Activated CD8-positive, alpha-beta T cell treated with anti-CD3 and anti-CD28 coated beads for 36 hours (primary cell): ENCODE measurements at regions of chr10 and their contacts with region 1.

Region 1: DNA sequence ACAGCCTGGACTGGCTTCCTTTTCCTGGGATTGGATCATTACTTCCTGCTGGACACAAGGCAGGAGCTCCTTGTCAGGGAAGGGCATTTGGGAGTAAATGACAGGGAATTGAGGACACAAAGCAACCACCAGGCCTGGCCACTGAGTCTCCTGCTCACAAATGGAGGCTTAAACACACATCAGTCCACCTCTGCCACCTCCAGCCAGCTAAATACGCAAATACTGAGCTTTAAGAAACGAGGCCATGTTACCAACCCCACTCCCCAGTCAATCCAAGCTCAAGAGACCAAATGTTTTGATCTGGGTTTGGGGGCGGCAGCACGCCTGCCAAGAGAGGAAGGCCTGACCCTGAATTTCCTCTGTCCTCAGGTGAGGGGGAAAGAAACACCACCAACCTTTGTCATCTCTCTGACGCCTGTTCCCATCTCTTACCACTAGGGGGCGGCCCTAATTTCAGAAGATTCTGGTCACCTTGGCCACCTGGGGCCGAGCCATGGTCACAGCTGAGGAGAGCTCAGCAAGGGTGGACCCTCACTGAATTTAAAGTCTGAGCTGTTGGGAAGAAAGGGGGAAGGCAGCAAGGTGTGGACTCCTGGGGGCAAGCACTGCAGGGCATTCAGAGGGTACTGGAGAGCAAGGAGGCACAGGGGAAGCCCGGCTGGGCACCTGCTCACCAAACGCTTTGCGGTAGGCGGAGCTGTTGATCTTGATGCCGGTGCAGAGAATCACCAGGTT is 16.5 kb downstream of the AIFM2 start:
- DNase-seq: peak; percentile 77
- ATAC-seq: peak; percentile 93
- H3K4me3 Mint-ChIP-seq: no peak overlapping the region
- H3K27ac Mint-ChIP-seq: no peak overlapping the region
- H3K4me1 Mint-ChIP-seq: peaks cover 11% of the 10 kb centered on the region
- H3K27me3 Mint-ChIP-seq: no peaks in the 10 kb centered on the region
- CTCF ChIP-seq: peak; percentile 90

Region 2: GRCh38 chr10:70048030-70048723 is 67.9 kb before region 1 on chr10:
- CTCF ChIA-PET with region 1: no interaction called
- POLR2A ChIA-PET with region 1: no interaction called
- intact Hi-C with region 1: no loop called
- DNase-seq: no peak
- ATAC-seq: no peak
- H3K4me3 Mint-ChIP-seq: no peak overlapping the region
- H3K27ac Mint-ChIP-seq: no peak overlapping the region
- H3K4me1 Mint-ChIP-seq: peaks cover 7% of the 10 kb centered on the region
- H3K27me3 Mint-ChIP-seq: peaks cover 26% of the 10 kb centered on the region
- CTCF ChIP-seq: no peak

Region 3: GRCh38 chr10:70084189-70084588 is 31.9 kb before region 1 on chr10:
- CTCF ChIA-PET with region 1: interaction called, 18 read pairs
- POLR2A ChIA-PET with region 1: no interaction called
- intact Hi-C with region 1: no loop called
- DNase-seq: no peak
- ATAC-seq: no peak
- H3K4me3 Mint-ChIP-seq: no peak overlapping the region
- H3K27ac Mint-ChIP-seq: no peak overlapping the region
- H3K4me1 Mint-ChIP-seq: no peaks in the 10 kb centered on the region
- H3K27me3 Mint-ChIP-seq: peaks cover 3% of the 10 kb centered on the region
- CTCF ChIP-seq: no peak

Region 4: GRCh38 chr10:70101668-70102067 is 14.4 kb before region 1 on chr10:
- CTCF ChIA-PET with region 1: interaction called, 99 read pairs
- POLR2A ChIA-PET with region 1: interaction called, 3 read pairs
- intact Hi-C with region 1: no loop called
- DNase-seq: no peak
- ATAC-seq: no peak
- H3K4me3 Mint-ChIP-seq: no peak overlapping the region
- H3K27ac Mint-ChIP-seq: no peak overlapping the region
- H3K4me1 Mint-ChIP-seq: peaks cover 2% of the 10 kb centered on the region
- H3K27me3 Mint-ChIP-seq: no peaks in the 10 kb centered on the region
- CTCF ChIP-seq: no peak

Region 5: DNA sequence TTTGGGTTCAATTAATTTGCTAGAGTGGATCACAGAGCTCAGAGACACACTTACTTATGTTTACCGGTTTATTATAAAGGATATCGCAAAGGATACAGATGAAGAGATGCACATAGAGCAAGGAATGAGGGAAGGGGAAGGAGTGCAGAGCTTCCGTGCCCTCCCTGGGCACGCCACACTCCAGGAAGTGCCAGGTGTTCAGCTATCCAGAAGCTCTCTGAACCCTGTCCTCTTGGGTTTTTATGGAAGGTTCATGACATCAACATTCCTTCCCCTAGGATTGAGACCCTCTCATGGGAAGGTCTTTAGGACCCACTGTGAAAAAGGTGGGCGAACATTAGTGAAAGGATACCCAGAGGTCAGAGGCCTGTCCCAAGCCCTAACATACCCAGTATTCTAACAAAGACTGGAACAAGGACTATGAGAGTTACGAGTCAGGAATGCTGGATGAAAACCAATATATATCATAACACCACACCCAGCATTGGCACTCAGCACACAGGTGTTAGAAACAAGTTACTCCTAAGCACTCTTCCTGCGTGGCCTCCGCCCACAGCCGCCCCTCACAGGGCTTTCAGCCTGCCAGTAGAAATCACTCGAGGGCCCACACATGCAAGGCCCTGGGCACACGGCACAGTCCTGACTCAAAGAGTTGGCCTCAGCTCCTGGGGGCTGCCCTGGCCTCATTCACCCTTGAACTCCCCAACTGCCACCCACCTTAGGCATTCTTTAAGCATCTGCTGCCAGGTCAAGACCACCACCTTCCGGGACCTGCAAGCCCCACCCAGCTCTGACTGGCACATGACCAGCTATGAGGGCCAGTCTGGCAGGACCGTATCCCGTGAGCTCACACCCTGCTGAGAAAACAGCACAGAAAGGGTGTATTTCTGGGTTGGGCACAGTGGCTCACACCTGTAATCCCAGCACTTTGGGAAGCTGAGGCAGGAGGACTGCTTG is 22.1 kb after region 1 on chr10:
- CTCF ChIA-PET with region 1: interaction called, 28 read pairs
- POLR2A ChIA-PET with region 1: interaction called, 4 read pairs
- intact Hi-C with region 1: no loop called
- DNase-seq: no peak
- ATAC-seq: no peak
- H3K4me3 Mint-ChIP-seq: no peak overlapping the region
- H3K27ac Mint-ChIP-seq: no peak overlapping the region
- H3K4me1 Mint-ChIP-seq: peaks cover 20% of the 10 kb centered on the region
- H3K27me3 Mint-ChIP-seq: no peaks in the 10 kb centered on the region
- CTCF ChIP-seq: no peak

Region 6: DNA sequence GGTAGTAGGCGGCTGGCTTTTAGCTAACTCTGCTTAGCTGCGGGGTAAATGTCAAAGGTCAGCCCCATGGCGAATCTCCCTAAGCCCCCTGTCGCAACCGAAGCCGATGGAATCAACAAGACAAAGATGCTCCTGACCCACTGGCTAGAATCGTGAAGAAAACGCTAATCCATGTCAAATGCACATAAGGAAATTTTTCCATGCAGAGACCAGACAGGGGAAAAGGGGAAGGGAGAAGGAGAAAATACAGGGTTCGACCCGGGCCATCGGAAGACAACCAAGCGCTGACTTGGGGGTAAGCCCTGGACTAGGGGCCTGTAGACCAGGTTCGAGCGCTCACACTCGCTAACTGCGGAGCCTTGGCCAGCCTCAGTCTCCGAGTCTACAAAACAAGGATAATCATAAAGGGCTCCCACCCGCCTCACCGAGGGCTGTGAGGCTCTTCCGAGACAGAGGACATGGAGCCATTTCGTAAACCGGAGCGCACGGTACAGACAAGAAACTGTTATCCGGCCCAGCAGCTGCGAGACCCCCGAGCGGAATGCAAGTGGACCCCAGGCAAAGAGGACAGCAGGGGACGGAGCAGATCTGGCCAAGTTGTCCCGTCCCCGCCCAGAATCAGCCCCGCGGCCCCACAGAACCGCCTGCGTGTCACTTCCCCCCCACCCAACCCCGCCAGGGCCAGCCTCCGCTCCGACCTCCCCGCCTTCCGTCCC is 53.7 kb after region 1 on chr10:
- CTCF ChIA-PET with region 1: interaction called, 11 read pairs
- POLR2A ChIA-PET with region 1: no interaction called
- intact Hi-C with region 1: no loop called
- DNase-seq: peak; percentile 45
- ATAC-seq: peak; percentile 9
- H3K4me3 Mint-ChIP-seq: peak overlapping the region; percentile 92
- H3K27ac Mint-ChIP-seq: peak overlapping the region; percentile 96
- H3K4me1 Mint-ChIP-seq: peaks cover 60% of the 10 kb centered on the region
- H3K27me3 Mint-ChIP-seq: no peaks in the 10 kb centered on the region
- CTCF ChIP-seq: no peak

Region 7: DNA sequence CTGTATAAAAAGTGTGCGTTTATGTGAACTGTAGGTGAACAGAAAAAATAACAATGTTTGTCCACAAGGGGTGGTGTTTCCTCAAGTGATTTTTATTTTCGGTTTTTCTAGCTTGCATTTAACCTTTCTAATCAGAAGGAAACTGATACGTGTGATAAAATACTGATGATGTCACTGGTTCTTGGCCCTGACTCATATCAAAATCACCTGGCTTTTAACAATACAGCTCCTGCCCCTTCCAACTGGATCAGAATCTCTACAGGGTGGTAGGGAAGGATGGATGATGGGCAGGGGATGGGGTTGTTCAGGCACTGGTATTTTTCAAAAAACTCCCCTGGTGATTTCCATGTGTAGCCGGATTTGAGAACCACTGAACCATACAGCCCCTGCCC is 156.8 kb after region 1 on chr10:
- CTCF ChIA-PET with region 1: interaction called, 11 read pairs
- POLR2A ChIA-PET with region 1: no interaction called
- intact Hi-C with region 1: no loop called
- DNase-seq: peak; percentile 20
- ATAC-seq: peak; percentile 91
- H3K4me3 Mint-ChIP-seq: no peak overlapping the region
- H3K27ac Mint-ChIP-seq: peak overlapping the region; percentile 52
- H3K4me1 Mint-ChIP-seq: peaks cover 14% of the 10 kb centered on the region
- H3K27me3 Mint-ChIP-seq: no peaks in the 10 kb centered on the region
- CTCF ChIP-seq: peak; percentile 72